ENCODE measurements at regions of chr1 and their contacts with region 1.

Region 1: DNA sequence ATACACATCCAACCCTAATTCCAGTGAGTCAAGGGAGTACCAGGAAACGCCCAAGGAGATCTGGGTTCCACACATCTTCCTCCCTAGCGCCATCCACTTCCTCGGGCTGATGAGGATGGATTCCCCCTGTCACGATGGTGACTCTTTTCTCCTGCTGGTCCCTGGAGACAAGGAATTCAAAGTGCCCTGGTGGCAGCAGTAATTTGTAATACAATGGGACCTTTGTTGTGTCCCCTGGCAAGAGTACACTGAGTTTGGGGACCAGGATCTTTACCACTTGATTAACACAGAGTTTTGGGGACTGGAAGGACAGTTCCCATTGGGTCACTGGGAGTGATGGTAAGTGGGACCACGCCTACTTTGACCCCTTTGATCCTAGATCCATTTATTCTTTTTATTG is 9.4 kb upstream of the JAK1 start:
- DNase-seq: no peak
- H3K4me3 ChIP-seq: no peak overlapping the region
- H3K27ac ChIP-seq: no peak overlapping the region
- H3K4me1 ChIP-seq: no peaks in the 10 kb centered on the region
- H3K27me3 ChIP-seq: no peaks in the 10 kb centered on the region
- CTCF ChIP-seq: no peak

Region 2: DNA sequence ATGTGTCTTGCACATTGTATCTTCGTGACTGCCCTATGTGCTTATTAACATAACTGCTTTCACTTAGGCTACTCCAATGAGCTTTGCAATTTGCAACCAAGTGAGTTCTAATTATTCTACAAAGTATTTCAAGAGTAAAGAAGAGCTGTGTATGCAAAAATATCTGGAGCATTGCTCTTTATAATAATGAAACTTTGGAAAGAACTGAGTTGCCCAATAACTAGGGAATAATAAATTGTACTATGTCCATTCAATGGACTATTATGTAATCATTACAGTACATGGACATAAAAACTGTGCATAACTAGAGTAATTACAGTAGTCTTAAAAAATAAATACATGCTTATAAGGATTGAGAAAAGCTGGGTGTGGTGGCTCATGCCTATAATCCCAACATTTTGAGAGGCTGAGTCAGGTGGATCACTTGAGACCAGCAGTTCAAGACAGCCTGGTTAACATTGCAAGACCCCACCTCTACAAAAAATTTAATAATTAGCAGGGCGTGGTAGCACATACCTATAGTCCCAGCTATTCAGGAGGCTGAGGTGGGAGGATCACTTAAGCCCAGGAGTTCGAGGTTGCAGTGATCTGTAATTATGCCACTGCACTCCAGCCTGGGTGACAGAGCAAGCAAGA is 60.9 kb after region 1 on chr1:
- CTCF ChIA-PET with region 1: no interaction called
- dilution Hi-C with region 1: no loop called
- in situ Hi-C with region 1: no loop called
- intact Hi-C with region 1: loop called (anchors 2 kb)
- DNase-seq: peak; percentile 22
- H3K4me3 ChIP-seq: no peak overlapping the region
- H3K27ac ChIP-seq: no peak overlapping the region
- H3K4me1 ChIP-seq: no peaks in the 10 kb centered on the region
- H3K27me3 ChIP-seq: no peaks in the 10 kb centered on the region
- CTCF ChIP-seq: no peak

Region 3: DNA sequence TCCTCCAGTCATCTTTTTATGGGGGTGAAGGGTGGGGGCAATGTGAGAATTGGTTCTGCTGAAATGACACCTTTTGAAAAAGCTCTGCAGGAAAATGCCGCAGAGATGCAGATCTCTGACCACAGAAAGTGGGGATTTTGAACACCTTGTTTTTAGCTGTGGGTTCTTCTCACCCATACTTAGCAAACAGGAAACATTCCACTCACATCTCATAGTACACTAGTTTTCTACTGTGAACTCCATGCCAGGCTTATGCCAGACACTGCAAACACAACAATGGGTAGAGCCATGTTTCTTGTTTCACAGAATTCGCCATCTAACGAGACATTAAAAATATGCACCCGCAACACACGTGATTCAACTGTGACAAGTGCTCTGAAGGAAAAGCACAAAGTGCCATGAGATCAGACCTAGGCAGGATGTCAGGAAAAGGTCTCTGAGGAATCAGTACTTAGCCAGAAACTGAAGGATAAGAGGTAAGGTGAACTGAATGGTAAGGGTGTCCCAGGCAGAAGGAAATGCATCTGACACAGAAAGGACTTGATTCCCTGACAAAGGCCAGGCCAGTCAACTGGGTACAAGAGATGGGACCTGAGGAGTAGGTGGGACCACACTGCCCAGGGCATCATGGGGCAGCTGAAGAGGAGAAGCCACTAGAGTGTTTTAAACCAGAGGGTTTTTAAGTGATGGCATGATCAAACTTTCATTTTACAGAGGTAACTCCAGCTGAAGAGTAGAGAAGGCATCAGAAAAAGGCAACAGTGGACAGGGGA is 74.4 kb after region 1 on chr1:
- CTCF ChIA-PET with region 1: no interaction called
- dilution Hi-C with region 1: loop called (anchors 5 kb)
- in situ Hi-C with region 1: no loop called
- intact Hi-C with region 1: no loop called
- DNase-seq: no peak
- H3K4me3 ChIP-seq: no peak overlapping the region
- H3K27ac ChIP-seq: no peak overlapping the region
- H3K4me1 ChIP-seq: no peaks in the 10 kb centered on the region
- H3K27me3 ChIP-seq: no peaks in the 10 kb centered on the region
- CTCF ChIP-seq: no peak

Measured in mammary epithelial cell (primary cell).